Activated CD8-positive, alpha-beta T cell treated with anti-CD3 and anti-CD28 coated beads, Interleukin-2, amount 10 ng/mL, durations not matched to agents 7 days and 5 days (primary cell): ENCODE measurements at regions of chr11 and their contacts with region 1.

Region 1: GRCh38 chr11:63478896-63479295 is 12.1 kb downstream of the PLAAT5 start:
- DNase-seq: peak; percentile 68
- ATAC-seq: peak; percentile 61
- H3K4me3 Mint-ChIP-seq: no peak overlapping the region
- H3K27ac Mint-ChIP-seq: no peak overlapping the region
- H3K4me1 Mint-ChIP-seq: no peaks in the 10 kb centered on the region
- H3K27me3 Mint-ChIP-seq: peaks cover 15% of the 10 kb centered on the region

Region 2: DNA sequence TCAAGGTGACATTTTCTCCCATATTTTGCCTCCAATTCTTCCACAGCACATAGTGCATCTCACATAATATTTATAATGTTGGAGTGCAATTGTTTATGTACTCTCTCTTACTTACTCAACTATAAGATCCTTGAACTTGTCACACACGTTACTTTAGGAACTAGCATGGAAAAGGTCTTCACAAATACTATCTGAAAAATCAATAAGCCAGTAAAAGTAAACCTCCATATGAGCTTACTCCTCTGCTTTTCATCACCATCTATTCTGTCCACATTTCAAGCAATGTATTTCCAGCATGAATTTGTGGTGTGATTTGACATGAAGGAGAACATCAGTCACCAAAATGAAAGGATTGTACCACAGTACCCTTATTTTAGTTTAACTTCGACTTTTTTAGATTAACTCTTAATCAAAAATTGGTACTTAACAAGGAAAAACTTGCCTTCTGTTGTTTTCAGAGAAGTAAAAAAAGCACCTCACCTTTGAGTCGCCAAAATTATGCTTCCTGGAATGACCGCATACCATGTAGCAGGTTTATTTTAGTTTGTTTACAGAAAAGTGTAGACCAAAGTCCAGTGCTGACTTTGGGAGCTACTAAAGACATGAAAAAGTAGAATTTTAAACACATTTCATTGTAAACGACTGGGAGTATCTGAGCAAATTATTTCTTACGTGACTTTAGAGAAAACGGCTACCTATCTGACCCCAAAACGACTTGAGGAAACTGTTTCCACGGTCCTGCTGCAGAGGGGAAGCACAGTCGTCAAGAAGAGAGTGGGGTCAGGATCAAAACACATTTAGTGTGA is 109.5 kb before region 1 on chr11 and contains the start of gene SLC22A9:
- CTCF ChIA-PET with region 1: no interaction called
- POLR2A ChIA-PET with region 1: no interaction called
- DNase-seq: no peak
- ATAC-seq: no peak
- H3K4me3 Mint-ChIP-seq: no peak within 1 kb of the TSS
- H3K27ac Mint-ChIP-seq: no peak within 1 kb of the TSS
- H3K4me1 Mint-ChIP-seq: no peaks in the 10 kb centered on the region
- H3K27me3 Mint-ChIP-seq: peaks cover 3% of the 10 kb centered on the region
- total RNA-seq, gene SLC22A9: not detected

Region 3: GRCh38 chr11:63508009-63508408 is 29.1 kb after region 1 on chr11:
- CTCF ChIA-PET with region 1: interaction called, 23 read pairs
- POLR2A ChIA-PET with region 1: no interaction called
- DNase-seq: peak; percentile 34
- ATAC-seq: no peak
- H3K4me3 Mint-ChIP-seq: no peak overlapping the region
- H3K27ac Mint-ChIP-seq: no peak overlapping the region
- H3K4me1 Mint-ChIP-seq: peaks cover 14% of the 10 kb centered on the region
- H3K27me3 Mint-ChIP-seq: no peaks in the 10 kb centered on the region

Region 4: GRCh38 chr11:63536669-63537292 is 57.9 kb after region 1 on chr11 and contains the start of gene PLAAT4:
- CTCF ChIA-PET with region 1: interaction called, 30 read pairs
- POLR2A ChIA-PET with region 1: interaction called, 6 read pairs
- DNase-seq: peak; percentile 48
- ATAC-seq: peak; percentile 71
- H3K4me3 Mint-ChIP-seq: peak within 1 kb of the TSS; percentile 84
- H3K27ac Mint-ChIP-seq: peak within 1 kb of the TSS; percentile 92
- H3K4me1 Mint-ChIP-seq: peaks cover 70% of the 10 kb centered on the region
- H3K27me3 Mint-ChIP-seq: no peaks in the 10 kb centered on the region
- total RNA-seq, gene PLAAT4: 97.5 to 99.8 TPM

Region 5: GRCh38 chr11:63567044-63567840 is 88.3 kb after region 1 on chr11:
- CTCF ChIA-PET with region 1: interaction called, 10 read pairs
- POLR2A ChIA-PET with region 1: no interaction called
- DNase-seq: peak; percentile 66
- ATAC-seq: peak; percentile 81
- H3K4me3 Mint-ChIP-seq: peak overlapping the region; percentile 12
- H3K27ac Mint-ChIP-seq: peak overlapping the region; percentile 74
- H3K4me1 Mint-ChIP-seq: peaks cover 48% of the 10 kb centered on the region
- H3K27me3 Mint-ChIP-seq: peaks cover 2% of the 10 kb centered on the region

Region 6: DNA sequence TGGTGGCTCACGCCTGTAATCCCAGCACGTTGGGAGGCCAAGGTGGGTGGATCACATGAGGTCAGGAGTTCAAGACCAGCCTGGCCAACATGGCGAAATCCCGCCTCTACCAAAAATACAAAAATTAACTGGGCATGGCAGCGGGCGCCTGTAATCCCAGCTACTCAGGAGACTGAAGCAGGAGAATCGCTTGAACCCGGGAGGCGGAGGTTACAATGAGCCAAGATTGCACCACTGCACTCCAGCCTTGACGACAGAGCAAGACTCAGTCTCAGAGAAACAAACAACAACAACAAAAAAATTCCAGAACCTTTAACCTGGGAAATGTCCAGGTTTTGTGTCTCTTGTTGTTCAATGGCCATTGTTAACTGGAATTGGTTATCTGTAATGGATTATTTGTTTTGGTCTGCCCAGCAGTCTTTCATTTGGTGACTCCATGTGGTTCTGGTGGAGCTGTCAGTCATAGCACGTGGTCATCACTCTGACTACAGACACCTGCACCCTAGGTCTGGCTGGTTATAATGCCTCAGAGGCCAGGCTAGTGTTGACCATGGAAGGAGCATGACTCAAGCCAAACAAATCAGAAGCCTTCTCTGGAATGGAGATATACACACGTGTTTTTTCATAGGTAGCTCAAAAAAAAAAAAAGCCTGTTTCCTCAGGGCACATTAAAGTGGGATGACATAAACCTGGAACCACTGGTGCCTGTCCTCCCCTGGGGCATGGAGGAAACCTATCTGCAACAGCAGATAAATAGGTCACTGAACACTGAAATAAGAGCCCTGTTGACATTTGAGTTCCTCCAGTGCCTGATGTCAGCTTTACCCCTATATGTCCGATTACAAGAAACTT is 143.3 kb after region 1 on chr11:
- CTCF ChIA-PET with region 1: interaction called, 21 read pairs
- POLR2A ChIA-PET with region 1: no interaction called
- DNase-seq: no peak
- ATAC-seq: no peak
- H3K4me3 Mint-ChIP-seq: no peak overlapping the region
- H3K27ac Mint-ChIP-seq: no peak overlapping the region
- H3K4me1 Mint-ChIP-seq: peaks cover 6% of the 10 kb centered on the region
- H3K27me3 Mint-ChIP-seq: no peaks in the 10 kb centered on the region

Region 7: DNA sequence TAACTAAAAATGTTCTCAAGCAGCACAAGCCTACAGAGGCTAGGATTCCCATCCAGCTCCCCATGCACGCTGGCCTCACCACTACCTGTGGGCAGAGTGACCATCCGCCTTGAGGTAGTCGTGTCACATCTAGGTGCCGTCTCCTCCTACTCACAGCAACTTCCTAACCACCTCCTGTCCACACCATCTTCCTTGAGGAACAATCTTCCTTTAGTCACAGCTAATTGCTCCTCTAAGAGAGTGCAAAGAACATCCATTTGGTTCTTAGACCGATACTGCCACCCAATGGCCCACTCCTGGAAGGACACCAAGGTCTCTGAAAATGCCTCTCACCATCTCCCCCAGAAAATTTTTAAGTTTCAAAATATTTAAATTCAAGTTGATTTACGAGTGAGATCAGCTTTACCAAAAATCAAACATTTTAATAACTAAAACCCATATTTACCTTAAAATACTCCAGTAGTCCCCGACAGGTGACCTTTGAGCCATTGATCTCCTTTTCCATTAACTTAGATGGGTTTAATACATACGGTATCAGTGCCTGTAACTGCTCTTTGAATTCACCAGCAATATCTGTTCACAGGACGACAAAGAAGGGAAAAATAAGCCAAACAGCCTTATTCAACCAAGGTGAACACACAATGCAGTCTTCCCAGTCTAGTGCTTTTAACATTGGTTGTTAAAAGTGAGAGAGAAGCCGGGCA is 157.0 kb after region 1 on chr11:
- CTCF ChIA-PET with region 1: interaction called, 198 read pairs
- POLR2A ChIA-PET with region 1: interaction called, 4 read pairs
- DNase-seq: peak; percentile 74
- ATAC-seq: peak; percentile 79
- H3K4me3 Mint-ChIP-seq: no peak overlapping the region
- H3K27ac Mint-ChIP-seq: no peak overlapping the region
- H3K4me1 Mint-ChIP-seq: peaks cover 10% of the 10 kb centered on the region
- H3K27me3 Mint-ChIP-seq: no peaks in the 10 kb centered on the region